Aorta (tissue), 5 donors: ENCODE measurements at regions of chr2 and their contacts with region 1.

Region 1: GRCh38 chr2:226835796-226836547 is at the start of gene RHBDD1:
- DNase-seq: peak; percentile 96 to 98
- ATAC-seq: peak; percentile 97
- H3K4me3 ChIP-seq: peak within 1 kb of the TSS; percentile 28 to 85
- H3K27ac ChIP-seq: peak within 1 kb of the TSS; percentile 78 to 84
- H3K4me1 ChIP-seq: peaks cover 0 to 5% of the 10 kb centered on the region in 2 donors
- H3K27me3 ChIP-seq: no peaks in the 10 kb centered on the region
- total RNA-seq, gene RHBDD1: 35.6 to 39.2 TPM

Region 2: GRCh38 chr2:226969417-226970080 is 133.6 kb after region 1 on chr2:
- intact Hi-C with region 1: loop called in 1 of 2 experiments (anchors 5 kb)
- DNase-seq: no peak
- ATAC-seq: peak; percentile 61
- H3K4me3 ChIP-seq: peak overlapping the region; percentile 16 to 20
- H3K27ac ChIP-seq: peak overlapping the region; percentile 63 to 74
- H3K4me1 ChIP-seq: peaks cover 5 to 11% of the 10 kb centered on the region in 2 donors
- H3K27me3 ChIP-seq: no peaks in the 10 kb centered on the region

Region 3: DNA sequence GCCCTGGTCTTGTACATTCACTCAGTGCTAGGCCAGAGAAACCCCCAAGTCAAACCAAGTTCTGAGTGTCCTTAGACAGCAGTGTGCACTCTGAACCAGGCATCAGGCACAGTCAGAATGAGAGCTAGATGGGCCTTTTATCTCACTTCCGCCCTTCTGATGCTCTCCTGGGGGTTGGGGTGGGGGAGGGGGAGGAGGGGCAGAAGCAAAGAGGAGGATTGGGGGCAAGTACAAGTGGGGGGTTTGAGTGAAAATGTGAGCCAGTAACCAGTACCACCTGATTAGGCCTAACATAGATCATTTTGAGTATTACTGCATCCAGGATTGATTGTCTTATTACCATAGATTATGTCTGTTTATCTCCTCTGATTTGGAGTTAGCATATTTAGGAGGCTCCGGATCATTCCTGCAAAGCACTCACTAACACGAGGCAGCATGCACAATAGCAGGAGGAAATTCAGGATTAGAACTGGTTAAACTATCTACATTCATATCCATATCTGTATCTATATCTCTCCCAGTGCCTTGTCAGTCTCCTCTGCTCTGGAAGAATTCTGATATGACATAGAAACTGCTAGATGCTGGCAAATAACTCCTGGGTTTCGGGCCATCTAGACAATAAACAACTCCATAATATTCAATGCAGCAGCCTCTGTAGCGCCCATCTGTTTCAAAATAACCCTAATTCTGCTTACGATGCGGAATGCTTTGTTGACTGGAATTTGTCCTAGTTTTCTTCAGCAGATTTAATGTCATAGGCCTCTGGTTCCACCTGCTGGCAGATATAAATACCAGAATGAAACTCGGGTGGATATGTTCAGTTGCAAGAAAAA is 149.0 kb after region 1 on chr2:
- intact Hi-C with region 1: loop called in 1 of 2 experiments (anchors 10 kb)
- DNase-seq: no peak
- ATAC-seq: peak; percentile 86
- H3K4me3 ChIP-seq: no peak overlapping the region
- H3K27ac ChIP-seq: peak overlapping the region in 1 of 2 donors; percentile 6
- H3K4me1 ChIP-seq: peaks cover 0 to 2% of the 10 kb centered on the region in 2 donors
- H3K27me3 ChIP-seq: no peaks in the 10 kb centered on the region